ENCODE measurements at regions of chrX and their contacts with region 1.

Region 1: GRCh38 chrX:119118780-119119395 is 8.7 kb downstream of the KIAA1210 start:
- DNase-seq: peak; percentile 63
- H3K4me3 Mint-ChIP-seq: no peak overlapping the region
- H3K27ac Mint-ChIP-seq: no peak overlapping the region
- H3K4me1 Mint-ChIP-seq: no peaks in the 10 kb centered on the region
- H3K27me3 Mint-ChIP-seq: peaks cover 3% of the 10 kb centered on the region

Region 2: DNA sequence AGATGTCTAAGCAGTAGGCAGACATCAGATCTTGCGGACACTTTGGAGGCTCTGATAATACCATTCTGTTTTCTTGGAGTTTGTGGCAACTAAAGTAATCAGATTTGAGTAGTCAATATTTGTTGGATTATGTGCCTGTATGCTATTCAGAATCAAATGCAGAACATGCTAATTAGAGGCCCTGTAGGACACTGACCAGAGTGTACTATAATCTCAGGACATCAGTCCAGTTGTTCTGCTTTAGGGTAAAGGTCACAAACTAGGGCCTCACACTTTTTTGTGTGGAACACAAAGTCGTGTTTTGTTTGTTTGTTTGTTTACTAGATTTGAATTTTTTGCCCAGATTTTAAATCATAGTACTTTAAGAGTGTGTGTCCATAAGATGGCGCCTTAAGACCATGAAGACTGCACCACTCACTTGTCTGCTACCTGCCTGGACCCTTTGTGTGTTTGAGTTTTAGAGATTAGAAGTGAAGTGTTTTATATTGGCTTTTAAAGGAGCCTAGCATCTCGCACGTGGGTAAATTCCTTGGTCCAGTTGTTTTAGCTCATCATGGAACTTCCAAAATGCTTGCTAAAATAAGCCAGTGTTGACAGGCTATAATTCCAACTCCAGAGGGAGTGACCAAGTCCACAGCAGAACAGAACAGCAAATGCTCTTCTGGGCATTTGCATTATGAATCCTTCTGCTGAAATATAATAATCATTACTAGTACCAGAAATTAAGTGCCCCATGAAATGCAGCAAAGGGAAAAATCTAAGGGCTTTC is 356.8 kb before region 1 on chrX:
- CTCF ChIA-PET with region 1: no interaction called
- POLR2A ChIA-PET with region 1: no interaction called
- intact Hi-C with region 1: no loop called
- DNase-seq: no peak
- H3K4me3 Mint-ChIP-seq: no peak overlapping the region
- H3K27ac Mint-ChIP-seq: no peak overlapping the region
- H3K4me1 Mint-ChIP-seq: no peaks in the 10 kb centered on the region
- H3K27me3 Mint-ChIP-seq: no peaks in the 10 kb centered on the region

Region 3: DNA sequence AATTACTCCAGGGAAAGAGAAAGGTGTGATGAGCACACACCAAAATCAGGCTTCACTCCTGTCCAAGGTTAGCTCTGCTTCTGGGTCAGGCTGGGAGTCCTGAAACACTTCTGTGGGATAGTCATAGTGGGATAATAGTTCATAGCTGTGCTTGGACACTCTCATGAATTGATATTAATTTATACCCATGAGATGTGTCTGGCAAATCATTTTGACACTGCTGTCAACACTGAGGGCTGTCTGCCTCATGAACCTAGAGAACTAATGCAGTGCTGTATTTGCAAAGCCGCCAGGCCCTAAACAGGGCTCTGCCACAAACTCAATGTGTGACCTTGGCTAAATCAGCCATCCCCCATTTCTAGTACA is 92.7 kb after region 1 on chrX:
- CTCF ChIA-PET with region 1: interaction called, 7 read pairs
- POLR2A ChIA-PET with region 1: no interaction called
- intact Hi-C with region 1: loop called (anchors 5 kb)
- DNase-seq: no peak
- H3K4me3 Mint-ChIP-seq: no peak overlapping the region
- H3K27ac Mint-ChIP-seq: no peak overlapping the region
- H3K4me1 Mint-ChIP-seq: no peaks in the 10 kb centered on the region
- H3K27me3 Mint-ChIP-seq: peaks cover 5% of the 10 kb centered on the region

Region 4: DNA sequence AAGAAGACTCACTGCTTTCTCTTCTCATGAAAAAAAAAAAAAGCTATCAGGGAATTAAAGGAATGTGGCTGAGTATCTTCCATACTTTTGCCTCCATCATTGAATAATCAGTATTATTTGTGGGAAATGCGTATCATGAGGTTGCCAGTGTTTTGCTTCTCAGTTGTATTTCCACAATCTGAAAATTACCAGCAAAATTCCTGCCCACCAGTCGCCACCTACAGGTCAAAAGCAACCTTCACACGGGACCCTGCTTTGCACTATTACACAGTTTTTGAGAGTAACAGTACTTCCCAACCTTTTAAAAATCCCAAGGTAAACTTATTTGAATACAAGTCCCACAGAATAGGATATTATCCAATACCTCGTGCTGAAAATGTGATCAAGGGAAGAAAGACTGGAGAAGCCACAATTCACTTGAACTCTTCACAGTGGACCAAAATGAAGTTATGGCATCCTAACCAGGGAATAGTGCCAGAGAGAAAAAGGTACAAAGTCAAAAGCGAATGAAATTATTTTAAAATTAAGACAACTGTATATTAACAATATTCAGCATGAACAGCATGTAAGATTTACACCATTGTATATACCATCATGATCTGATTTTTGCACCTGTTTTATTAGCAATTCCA is 147.6 kb after region 1 on chrX:
- CTCF ChIA-PET with region 1: interaction called, 10 read pairs
- POLR2A ChIA-PET with region 1: no interaction called
- intact Hi-C with region 1: loop called (anchors 1 kb)
- DNase-seq: peak; percentile 32
- H3K4me3 Mint-ChIP-seq: no peak overlapping the region
- H3K27ac Mint-ChIP-seq: no peak overlapping the region
- H3K4me1 Mint-ChIP-seq: no peaks in the 10 kb centered on the region
- H3K27me3 Mint-ChIP-seq: no peaks in the 10 kb centered on the region

Measured in activated CD4-positive, alpha-beta memory T cell treated with anti-CD3 and anti-CD28 coated beads for 36 hours (primary cell).